AG04449 (cell line): ENCODE measurements at regions of chr1 and their contacts with region 1.

Region 1: DNA sequence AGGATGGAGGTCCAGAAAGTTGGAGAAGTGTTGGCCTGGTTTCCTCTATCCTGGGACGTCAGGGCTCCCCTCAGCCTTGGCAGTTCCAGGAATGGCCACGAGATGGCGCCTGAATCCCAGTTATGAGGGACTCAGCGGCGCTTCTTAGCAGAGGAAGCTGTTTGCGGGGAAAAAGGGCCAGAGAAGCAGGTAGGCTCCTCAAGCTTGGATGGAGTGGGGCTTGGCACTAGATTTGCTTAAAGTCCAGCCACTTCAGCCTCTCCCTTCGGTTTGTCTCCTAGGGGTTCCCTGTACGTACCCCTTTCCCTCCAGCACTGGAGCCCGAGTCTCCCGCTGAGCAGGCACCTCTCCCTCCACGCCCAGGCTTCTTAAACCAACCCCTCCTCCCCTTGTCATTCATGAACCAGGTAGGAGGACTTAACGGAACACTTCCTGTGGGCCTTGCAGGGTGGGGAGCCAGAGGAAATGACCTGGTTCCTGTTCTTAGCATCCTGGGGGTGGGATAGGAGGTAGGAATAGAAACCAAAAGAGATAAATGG is 32.0 kb upstream of the TENT5B start:
- DNase-seq: no peak
- H3K4me3 ChIP-seq: no peak overlapping the region
- CTCF ChIP-seq: peak; percentile 95

Region 2: DNA sequence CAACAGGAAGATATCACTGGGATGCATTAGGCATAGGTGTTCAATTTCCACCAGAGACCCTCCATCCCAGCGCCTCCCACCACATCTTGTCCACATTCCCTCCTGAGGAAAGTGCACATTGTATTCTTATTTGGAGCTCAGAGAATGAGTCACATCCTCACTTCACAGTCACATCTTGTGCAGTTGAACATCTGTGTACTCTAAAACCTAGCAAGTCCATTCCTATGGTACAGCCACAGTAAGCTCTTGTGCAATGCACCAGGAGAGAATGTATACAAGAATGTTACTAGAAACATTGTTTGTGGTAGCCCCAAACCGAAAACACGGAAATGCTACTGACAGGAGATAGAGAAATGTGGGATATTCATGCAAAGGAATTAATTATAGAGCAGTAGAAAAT is 82.9 kb before region 1 on chr1:
- CTCF ChIA-PET with region 1: interaction called, 32 read pairs
- POLR2A ChIA-PET with region 1: no interaction called
- DNase-seq: peak; percentile 81
- H3K4me3 ChIP-seq: no peak overlapping the region
- CTCF ChIP-seq: no peak

Region 3: GRCh38 chr1:27031235-27032118 is 13.2 kb before region 1 on chr1:
- CTCF ChIA-PET with region 1: interaction called, 185 read pairs
- POLR2A ChIA-PET with region 1: no interaction called
- DNase-seq: no peak
- H3K4me3 ChIP-seq: peak overlapping the region; percentile 37
- CTCF ChIP-seq: no peak

Region 4: GRCh38 chr1:27071049-27071416 is 26.4 kb after region 1 on chr1:
- CTCF ChIA-PET with region 1: interaction called, 66 read pairs
- POLR2A ChIA-PET with region 1: interaction called, 3 read pairs
- DNase-seq: peak; percentile 10
- H3K4me3 ChIP-seq: no peak overlapping the region
- CTCF ChIP-seq: no peak

Region 5: GRCh38 chr1:27111626-27112573 is 67.2 kb after region 1 on chr1:
- CTCF ChIA-PET with region 1: interaction called, 13 read pairs
- POLR2A ChIA-PET with region 1: no interaction called
- DNase-seq: peak; percentile 98
- H3K4me3 ChIP-seq: no peak overlapping the region
- CTCF ChIP-seq: peak; percentile 72

Region 6: GRCh38 chr1:27284425-27285273 is 240.0 kb after region 1 on chr1:
- CTCF ChIA-PET with region 1: interaction called, 103 read pairs
- POLR2A ChIA-PET with region 1: no interaction called
- DNase-seq: no peak
- H3K4me3 ChIP-seq: no peak overlapping the region
- CTCF ChIP-seq: peak; percentile 73